Activated T-helper 2 cell treated with anti-CD3 and anti-CD28 coated beads, Interferon-gamma antibody, Interleukin-2, Interleukin-4, amounts not matched to agents 10 μg/mL and 5 μg/mL and 100 μg/mL, durations not matched to agents 14 hours and 24 hours and 36 hours (primary cell): ENCODE measurements at regions of chr15 and their contacts with region 1.

Region 1: GRCh38 chr15:77002954-77003912 is 8.3 kb downstream of the PSTPIP1 start:
- DNase-seq: peak; percentile 67
- H3K4me3 Mint-ChIP-seq: peak overlapping the region; percentile 66
- H3K27ac Mint-ChIP-seq: peak overlapping the region; percentile 92
- H3K4me1 Mint-ChIP-seq: peaks cover 66% of the 10 kb centered on the region
- H3K27me3 Mint-ChIP-seq: no peaks in the 10 kb centered on the region

Region 2: DNA sequence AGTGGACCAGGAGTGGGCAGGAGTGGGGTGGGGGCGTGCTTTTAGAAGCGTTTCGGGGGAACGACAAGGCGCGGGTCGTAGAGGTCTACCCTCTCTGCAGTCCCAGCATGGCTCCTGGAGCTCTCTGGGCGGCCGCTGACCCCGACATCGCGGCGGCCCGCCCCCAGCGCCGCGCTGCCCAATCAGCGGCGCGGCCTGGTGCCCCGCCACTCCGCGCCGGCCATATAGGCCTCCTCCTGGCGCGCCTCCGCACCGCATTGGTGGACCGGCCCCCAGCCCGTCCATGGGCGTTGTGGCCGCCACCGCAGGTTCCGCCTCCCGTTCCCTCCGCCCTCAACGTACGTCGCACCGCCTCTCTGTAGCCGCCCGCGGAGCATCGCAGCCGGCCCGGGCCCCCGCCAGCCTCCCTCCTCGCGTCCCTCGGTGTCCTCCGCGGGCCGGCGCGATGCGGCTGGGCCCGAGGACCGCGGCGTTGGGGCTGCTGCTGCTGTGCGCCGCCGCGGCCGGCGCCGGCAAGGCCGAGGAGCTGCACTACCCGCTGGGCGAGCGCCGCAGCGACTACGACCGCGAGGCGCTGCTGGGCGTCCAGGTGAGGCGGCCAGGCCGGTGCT is 71.7 kb before region 1 on chr15 and contains the start of gene RCN2:
- intact Hi-C with region 1: no loop called
- DNase-seq: peak; percentile 93
- H3K4me3 Mint-ChIP-seq: peak within 1 kb of the TSS; percentile 85
- H3K27ac Mint-ChIP-seq: peak within 1 kb of the TSS; percentile 85
- H3K4me1 Mint-ChIP-seq: peaks cover 26% of the 10 kb centered on the region
- H3K27me3 Mint-ChIP-seq: peaks cover 14% of the 10 kb centered on the region
- total RNA-seq, gene RCN2: 35.7 and 36.1 TPM in 2 replicates

Region 3: DNA sequence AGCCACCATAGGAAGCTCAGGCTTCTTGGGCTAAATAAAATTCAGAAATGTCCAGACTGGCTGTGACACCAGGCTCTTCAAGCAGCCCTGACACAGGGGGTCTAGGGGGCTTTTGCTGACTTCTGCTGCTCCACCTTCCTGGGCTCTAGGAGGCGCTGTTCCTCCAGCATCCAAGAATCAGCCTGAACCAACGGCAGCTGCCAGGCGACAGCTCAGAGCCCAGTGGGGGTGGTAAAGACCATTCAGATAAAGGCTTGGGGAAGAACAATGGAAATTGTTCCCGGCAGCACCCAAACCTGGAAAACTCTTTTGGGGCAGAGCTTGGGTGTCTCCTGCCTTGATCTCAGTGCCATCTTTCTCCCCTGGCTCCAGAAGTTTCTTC is 29.9 kb before region 1 on chr15:
- intact Hi-C with region 1: loop called (anchors 2 kb)
- DNase-seq: no peak
- H3K4me3 Mint-ChIP-seq: no peak overlapping the region
- H3K27ac Mint-ChIP-seq: peak overlapping the region; percentile 42
- H3K4me1 Mint-ChIP-seq: peaks cover 32% of the 10 kb centered on the region
- H3K27me3 Mint-ChIP-seq: peaks cover 7% of the 10 kb centered on the region

Region 4: GRCh38 chr15:76987926-76988860 is 15.0 kb before region 1 on chr15:
- intact Hi-C with region 1: loop called (anchors 1 kb)
- DNase-seq: peak; percentile 76
- H3K4me3 Mint-ChIP-seq: peak overlapping the region; percentile 58
- H3K27ac Mint-ChIP-seq: peak overlapping the region; percentile 99
- H3K4me1 Mint-ChIP-seq: peaks cover 62% of the 10 kb centered on the region
- H3K27me3 Mint-ChIP-seq: no peaks in the 10 kb centered on the region

Region 5: DNA sequence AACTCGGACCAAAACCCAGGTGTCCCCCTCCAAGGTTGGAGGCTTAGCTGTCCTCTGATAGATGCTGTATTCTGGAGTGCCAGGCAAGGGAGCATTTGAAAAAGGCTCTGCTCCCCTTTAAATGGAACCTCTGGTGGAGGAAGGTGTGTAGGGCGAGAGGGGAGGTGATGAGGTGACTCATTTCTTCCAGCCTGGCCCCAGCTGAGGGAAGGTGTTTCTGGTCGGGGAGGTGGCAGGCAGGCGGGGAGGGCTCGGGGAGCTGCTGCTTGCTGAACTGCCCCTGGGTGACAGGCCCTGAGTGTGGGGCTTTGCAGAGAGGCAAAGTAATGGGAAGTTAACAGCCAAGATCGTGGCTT is 10.5 kb after region 1 on chr15:
- intact Hi-C with region 1: loop called (anchors 1 kb)
- DNase-seq: peak; percentile 80
- H3K4me3 Mint-ChIP-seq: peak overlapping the region; percentile 39
- H3K27ac Mint-ChIP-seq: peak overlapping the region; percentile 84
- H3K4me1 Mint-ChIP-seq: peaks cover 70% of the 10 kb centered on the region
- H3K27me3 Mint-ChIP-seq: no peaks in the 10 kb centered on the region